MCF 10A (cell line): ENCODE measurements at regions of chr2 and their contacts with region 1.

Region 1: DNA sequence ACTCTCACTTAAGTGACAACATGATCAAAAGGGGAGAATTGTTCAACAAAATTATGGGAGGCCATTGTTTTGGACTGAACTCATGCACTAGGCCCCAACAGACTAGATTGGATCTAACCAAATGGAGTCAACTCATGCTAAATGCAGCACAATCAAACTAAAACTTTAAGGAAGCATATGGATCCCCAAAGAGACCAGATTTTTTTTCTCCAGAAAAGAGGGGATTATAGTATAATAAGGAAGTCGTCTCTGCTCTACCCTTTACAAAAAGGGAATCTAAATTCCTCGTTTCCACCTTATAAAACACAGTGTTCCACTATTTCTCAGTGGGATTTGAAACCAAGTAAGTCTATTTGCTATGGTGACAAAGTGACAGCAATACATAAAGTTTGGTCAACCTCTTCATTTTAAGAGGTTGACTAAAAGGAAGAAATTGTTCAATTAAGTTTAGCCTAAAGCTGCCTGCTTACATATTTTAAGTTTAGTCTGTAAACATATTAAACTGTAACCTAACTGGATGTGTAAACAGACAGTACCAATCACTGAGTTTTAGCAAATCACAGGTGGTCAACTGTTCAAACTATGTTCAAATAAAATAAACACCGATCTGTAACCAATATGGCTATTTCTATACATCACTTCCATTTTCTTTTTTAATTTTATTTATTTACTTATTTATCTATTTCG is 40.9 kb upstream of the MAT2A start:
- DNase-seq: no peak
- H3K4me3 Mint-ChIP-seq: no peak overlapping the region
- H3K27ac Mint-ChIP-seq: peak overlapping the region; percentile 96
- H3K4me1 Mint-ChIP-seq: peaks cover 4% of the 10 kb centered on the region
- H3K27me3 Mint-ChIP-seq: no peaks in the 10 kb centered on the region
- CTCF ChIP-seq: no peak

Region 2: GRCh38 chr2:85468704-85469349 is 29.3 kb before region 1 on chr2:
- CTCF ChIA-PET with region 1: interaction called, 4 read pairs
- POLR2A ChIA-PET with region 1: interaction called, 48 read pairs
- intact Hi-C with region 1: no loop called
- DNase-seq: peak; percentile 87
- H3K4me3 Mint-ChIP-seq: no peak overlapping the region
- H3K27ac Mint-ChIP-seq: no peak overlapping the region
- H3K4me1 Mint-ChIP-seq: peaks cover 29% of the 10 kb centered on the region
- H3K27me3 Mint-ChIP-seq: no peaks in the 10 kb centered on the region
- CTCF ChIP-seq: no peak

Region 3: GRCh38 chr2:85662899-85663593 is 165.0 kb after region 1 on chr2:
- CTCF ChIA-PET with region 1: no interaction called
- POLR2A ChIA-PET with region 1: no interaction called
- intact Hi-C with region 1: no loop called
- DNase-seq: peak; percentile 97
- H3K4me3 Mint-ChIP-seq: no peak overlapping the region
- H3K27ac Mint-ChIP-seq: no peak overlapping the region
- H3K4me1 Mint-ChIP-seq: peaks cover 4% of the 10 kb centered on the region
- H3K27me3 Mint-ChIP-seq: no peaks in the 10 kb centered on the region
- CTCF ChIP-seq: no peak